ENCODE measurements at regions of chr20 and their contacts with region 1.

Region 1: GRCh38 chr20:58650776-58651558 is at the start of gene STX16:
- DNase-seq: peak; percentile 95
- H3K4me3 Mint-ChIP-seq: peak within 1 kb of the TSS; percentile 99
- H3K27ac Mint-ChIP-seq: peak within 1 kb of the TSS; percentile 99
- H3K4me1 Mint-ChIP-seq: peaks cover 20% of the 10 kb centered on the region
- H3K27me3 Mint-ChIP-seq: no peaks in the 10 kb centered on the region
- total RNA-seq, gene STX16: 106 and 110 TPM in 2 replicates

Region 2: DNA sequence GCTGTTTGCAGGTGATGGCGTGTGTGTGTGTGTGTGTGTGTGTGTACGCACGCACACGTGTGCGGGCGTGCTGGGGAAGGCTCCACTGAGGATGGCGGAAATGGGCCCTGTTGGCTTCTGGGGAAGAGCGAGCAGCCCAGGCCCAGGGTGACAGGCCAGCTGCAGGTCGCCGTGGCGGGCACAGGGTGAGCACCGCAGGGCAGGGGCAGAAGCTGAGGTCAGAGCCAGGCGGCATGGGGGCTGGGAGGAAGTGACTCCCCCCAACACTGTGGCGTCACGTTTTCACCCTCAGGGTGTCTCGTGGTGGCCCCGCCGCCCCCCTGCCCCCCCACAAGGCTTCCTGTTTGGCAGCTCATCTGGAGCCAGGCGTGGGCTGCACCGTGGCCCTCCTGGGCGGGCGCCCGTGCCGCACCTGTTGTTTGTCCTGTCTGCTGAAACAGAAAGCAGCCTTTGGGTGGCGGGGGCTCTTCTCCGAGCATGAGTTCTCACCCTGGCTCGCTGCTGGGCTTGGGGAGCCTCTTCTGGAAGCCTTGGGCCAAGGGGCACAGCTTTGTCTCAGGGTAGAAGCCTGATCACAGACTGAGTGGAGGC is 1252.6 kb before region 1 on chr20:
- intact Hi-C with region 1: loop called (anchors 5 kb)
- DNase-seq: peak; percentile 92
- H3K4me3 Mint-ChIP-seq: peak overlapping the region; percentile 86
- H3K27ac Mint-ChIP-seq: peak overlapping the region; percentile 95
- H3K4me1 Mint-ChIP-seq: peaks cover 69% of the 10 kb centered on the region
- H3K27me3 Mint-ChIP-seq: no peaks in the 10 kb centered on the region

Region 3: DNA sequence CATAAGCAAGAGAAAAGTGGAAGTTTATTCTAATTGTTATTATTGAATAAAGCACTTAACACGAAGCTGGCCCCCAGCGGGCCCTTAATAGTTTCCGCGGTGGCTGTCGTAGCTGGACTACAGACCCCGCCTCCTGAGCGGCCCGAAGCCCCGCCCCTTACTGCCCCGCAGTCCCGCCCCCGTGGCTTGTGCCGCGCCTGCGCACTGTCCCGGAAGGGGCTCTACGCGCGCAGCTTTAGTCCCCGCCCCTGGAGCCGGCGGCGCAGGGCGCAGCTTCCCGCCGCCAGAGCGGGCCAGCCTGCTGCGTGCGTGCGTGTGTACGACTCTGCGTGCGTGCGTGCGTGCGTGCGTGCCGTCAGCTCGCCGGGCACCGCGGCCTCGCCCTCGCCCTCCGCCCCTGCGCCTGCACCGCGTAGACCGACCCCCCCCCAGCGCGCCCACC is 262.1 kb before region 1 on chr20 and contains the start of gene VAPB:
- intact Hi-C with region 1: loop called (anchors 5 kb)
- DNase-seq: peak; percentile 99
- H3K4me3 Mint-ChIP-seq: peak within 1 kb of the TSS; percentile 89
- H3K27ac Mint-ChIP-seq: peak within 1 kb of the TSS; percentile 93
- H3K4me1 Mint-ChIP-seq: peaks cover 30% of the 10 kb centered on the region
- H3K27me3 Mint-ChIP-seq: peaks cover 12% of the 10 kb centered on the region
- total RNA-seq, gene VAPB: 35.0 and 36.5 TPM in 2 replicates

Region 4: GRCh38 chr20:58583176-58583575 is 67.8 kb before region 1 on chr20:
- intact Hi-C with region 1: no loop called
- DNase-seq: no peak
- H3K4me3 Mint-ChIP-seq: no peak overlapping the region
- H3K27ac Mint-ChIP-seq: no peak overlapping the region
- H3K4me1 Mint-ChIP-seq: no peaks in the 10 kb centered on the region
- H3K27me3 Mint-ChIP-seq: no peaks in the 10 kb centered on the region

Region 5: DNA sequence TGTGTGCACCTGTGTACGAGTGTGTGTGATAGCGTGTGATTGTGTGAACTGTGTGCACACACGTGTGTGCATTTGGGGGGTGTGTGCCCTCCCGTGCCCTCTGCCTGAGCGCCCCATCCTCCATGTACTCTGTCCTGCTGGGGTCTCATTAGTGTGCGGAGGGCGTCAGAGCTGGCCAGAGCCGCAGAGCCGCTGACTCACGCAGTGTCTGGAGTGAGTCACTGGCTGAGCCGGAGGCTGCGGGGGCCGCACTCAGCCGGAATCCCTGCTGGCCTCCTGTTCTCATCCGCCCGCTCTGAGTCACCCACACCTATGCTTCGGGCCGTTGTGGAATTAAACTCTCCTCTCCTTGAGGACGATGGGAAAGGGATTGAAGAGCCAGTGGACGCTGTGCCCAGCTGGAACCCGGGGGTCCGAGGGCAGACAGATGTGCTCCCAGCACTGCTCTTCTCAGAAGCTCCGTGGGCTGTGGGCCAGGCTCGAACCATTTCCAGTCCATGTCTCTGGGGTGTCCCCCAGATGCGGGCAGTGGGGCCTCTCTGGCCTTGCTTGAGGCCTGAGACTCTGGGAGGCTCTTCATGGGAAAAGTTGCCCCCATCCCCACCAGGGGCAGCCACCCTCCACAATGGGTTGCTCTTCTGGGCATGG is 27.0 kb before region 1 on chr20:
- intact Hi-C with region 1: no loop called
- DNase-seq: no peak
- H3K4me3 Mint-ChIP-seq: no peak overlapping the region
- H3K27ac Mint-ChIP-seq: no peak overlapping the region
- H3K4me1 Mint-ChIP-seq: no peaks in the 10 kb centered on the region
- H3K27me3 Mint-ChIP-seq: peaks cover 2% of the 10 kb centered on the region

Region 6: DNA sequence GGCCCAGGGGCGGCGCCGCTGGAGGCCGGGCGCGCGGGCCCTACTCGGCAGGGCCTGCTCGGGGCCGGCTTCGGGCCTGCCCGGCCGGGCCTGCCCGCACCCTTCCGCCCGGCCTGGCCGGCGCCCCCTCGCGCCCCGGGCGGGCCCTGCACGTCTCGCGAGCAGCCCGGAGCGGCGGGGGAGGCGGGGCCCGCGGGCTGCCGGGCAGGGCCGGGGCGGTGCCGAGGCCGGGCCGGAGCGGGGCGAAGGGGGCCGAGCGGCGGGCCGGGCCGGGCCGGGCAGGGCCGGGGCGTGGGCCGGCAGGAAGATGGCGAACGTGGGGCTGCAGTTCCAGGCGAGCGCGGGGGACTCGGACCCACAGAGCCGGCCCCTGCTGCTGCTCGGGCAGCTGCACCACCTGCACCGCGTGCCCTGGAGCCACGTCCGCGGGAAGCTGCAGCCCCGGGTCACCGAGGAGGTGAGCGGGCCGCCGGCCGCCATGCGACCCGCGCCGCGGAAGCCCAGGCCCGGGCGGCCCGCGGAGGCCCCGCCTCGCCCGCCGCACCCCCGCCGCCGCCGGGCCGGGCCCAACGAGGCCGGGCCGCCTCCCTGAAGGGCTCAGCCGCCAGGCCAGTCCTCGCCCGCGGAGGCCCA is 41.7 kb after region 1 on chr20 and contains the start of gene NPEPL1:
- intact Hi-C with region 1: loop called (anchors 1 kb)
- DNase-seq: peak; percentile 92
- H3K4me3 Mint-ChIP-seq: peak within 1 kb of the TSS; percentile 84
- H3K27ac Mint-ChIP-seq: peak within 1 kb of the TSS; percentile 79
- H3K4me1 Mint-ChIP-seq: peaks cover 12% of the 10 kb centered on the region
- H3K27me3 Mint-ChIP-seq: no peaks in the 10 kb centered on the region
- total RNA-seq, gene NPEPL1: 22.3 and 23.1 TPM in 2 replicates

Region 7: DNA sequence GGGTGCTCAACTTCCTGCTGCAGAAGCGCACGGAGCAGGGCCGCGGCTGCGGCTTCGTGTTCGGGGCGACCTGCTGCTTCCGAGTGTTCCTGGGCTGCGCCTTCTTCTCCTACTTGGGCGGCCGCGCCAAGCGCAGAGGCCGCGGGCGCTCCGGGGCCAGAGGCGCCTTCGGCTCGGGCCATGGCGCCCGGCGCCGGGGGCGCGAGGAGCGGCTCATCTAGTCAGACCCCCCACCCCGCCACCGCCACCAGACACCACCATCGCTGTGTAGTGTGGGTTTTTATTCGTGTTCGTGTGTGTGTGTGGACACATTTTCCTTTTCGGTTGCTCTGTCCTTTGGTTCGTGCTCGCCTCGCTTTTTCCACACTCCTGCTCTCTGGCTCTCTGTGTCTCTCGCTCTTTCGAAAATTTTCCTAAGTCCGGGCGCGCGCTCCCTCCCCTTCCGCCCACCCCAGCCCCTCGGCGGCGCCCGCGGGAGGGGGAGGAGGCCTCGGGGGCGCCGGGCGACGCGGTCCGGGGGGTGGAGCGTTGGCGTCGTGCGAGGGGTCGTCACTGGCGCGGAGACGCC is 239.6 kb after region 1 on chr20:
- intact Hi-C with region 1: loop called (anchors 2 kb)
- DNase-seq: peak; percentile 87
- H3K4me3 Mint-ChIP-seq: peak overlapping the region; percentile 94
- H3K27ac Mint-ChIP-seq: peak overlapping the region; percentile 97
- H3K4me1 Mint-ChIP-seq: peaks cover 38% of the 10 kb centered on the region
- H3K27me3 Mint-ChIP-seq: no peaks in the 10 kb centered on the region

Region 8: DNA sequence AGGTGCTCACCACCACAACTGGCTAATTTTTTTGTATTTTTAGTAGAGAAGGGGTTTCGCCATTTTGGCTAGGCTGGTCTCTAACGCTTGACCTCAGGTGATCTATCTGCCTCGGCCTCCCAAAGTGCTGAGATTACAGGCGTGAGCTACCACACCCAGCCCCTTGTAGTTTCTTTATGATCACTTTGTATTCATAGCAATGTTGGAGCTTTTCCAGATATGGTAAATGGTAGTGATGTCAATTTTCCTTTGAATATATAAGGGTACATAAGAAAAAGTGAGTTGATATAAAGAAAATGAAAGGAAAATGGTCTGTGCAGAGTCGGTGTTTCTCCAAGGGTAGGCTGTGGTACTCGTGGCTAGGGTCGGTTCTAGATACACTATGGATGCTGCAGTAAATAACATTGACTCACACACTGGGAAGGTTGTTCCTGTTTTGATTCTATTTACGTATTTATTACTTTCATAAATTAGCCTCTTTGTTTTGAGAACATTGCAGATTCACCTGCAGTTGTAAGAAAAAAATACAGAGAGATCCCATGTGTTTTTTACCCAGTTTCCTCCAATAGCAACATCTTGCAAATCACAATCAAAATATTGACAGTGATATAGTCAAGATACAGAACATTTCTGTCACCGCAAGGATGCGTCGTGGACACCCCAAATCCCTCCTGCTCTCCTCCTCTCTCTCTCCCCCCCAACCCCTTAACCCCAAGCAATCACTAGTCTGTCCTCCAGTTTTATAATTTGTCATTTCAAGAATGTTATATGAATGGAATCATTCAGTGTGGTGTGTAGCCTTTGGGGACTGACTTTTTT is 515.1 kb after region 1 on chr20:
- intact Hi-C with region 1: loop called (anchors 5 kb)
- DNase-seq: peak; percentile 75
- H3K4me3 Mint-ChIP-seq: peak overlapping the region; percentile 87
- H3K27ac Mint-ChIP-seq: peak overlapping the region; percentile 88
- H3K4me1 Mint-ChIP-seq: peaks cover 73% of the 10 kb centered on the region
- H3K27me3 Mint-ChIP-seq: no peaks in the 10 kb centered on the region

Measured in activated CD4-positive, alpha-beta T cell treated with anti-CD3 and anti-CD28 coated beads, Interleukin-2, amount 10 ng/mL, durations not matched to agents 24 days and 14 days (primary cell).